ENCODE measurements at regions of chr1 and their contacts with region 1.

Region 1: DNA sequence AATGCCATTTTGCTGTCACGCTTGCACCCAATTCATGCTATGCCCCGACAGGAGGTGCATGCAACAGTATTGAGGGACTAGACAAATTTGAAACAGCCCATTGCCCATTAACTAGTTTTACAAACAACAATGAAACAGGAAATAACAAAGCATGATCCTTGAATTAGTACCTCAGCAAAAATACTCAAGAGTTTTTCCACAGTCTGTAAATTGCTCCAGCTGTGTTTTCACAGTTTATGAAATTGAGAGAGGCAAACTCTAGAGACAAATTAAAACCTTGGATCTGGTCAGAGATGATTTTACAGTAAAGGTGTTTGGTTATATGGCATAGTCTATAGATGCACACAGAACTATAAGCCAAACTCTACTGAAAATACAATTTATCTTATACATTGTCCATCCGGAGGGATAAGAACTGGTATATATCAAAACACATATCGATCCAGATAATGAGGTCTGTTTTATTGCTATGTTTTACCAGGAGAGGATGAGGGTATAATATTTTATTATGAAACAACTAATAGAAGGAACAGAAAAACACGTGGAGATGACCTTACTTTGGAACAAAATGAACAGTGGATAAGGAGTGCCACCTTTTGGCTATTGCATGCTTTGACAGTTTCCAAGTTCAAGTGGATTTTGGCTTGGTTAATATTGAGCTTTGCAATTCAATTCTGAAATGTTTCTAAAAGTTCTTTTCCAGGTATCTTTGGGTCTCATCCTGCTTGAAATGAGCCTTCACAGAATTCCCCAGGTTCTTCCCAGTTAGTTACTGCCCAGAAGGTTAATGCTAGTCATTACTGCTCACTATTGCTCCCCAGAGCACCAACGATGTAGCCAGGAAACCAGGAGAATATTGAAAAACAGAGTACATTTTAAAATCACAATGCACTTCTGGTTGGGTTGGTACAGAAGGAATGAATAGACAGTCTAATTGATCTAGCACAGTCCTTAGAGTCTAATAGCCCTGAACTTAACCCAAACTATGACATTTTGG is 45.7 kb downstream of the ZC3H11B start:
- DNase-seq: no peak
- H3K4me3 ChIP-seq: no peak overlapping the region
- H3K27ac ChIP-seq: no peak overlapping the region
- H3K4me1 ChIP-seq: no peaks in the 10 kb centered on the region
- H3K27me3 ChIP-seq: peaks cover 0 to 13% (median 0%) of the 10 kb centered on the region in 7 donors
- CTCF ChIP-seq: peak in 3 of 11 experiments; percentile 10 to 31 (median 28)
- POLR2A ChIP-seq: no peak

Region 2: GRCh38 chr1:219109424-219110018 is 457.7 kb before region 1 on chr1:
- intact Hi-C with region 1: loop called (anchors 10 kb)
- DNase-seq: no peak
- H3K4me3 ChIP-seq: no peak overlapping the region
- H3K27ac ChIP-seq: no peak overlapping the region
- H3K4me1 ChIP-seq: no peaks in the 10 kb centered on the region
- H3K27me3 ChIP-seq: peaks cover 0 to 9% (median 0%) of the 10 kb centered on the region in 7 donors
- CTCF ChIP-seq: no peak
- POLR2A ChIP-seq: no peak

Measured in spleen (tissue), 13 donors.